ENCODE measurements at regions of chr3 and their contacts with region 1.

Region 1: GRCh38 chr3:46866720-46867549 is 3.7 kb upstream of the MYL3 start:
- DNase-seq: peak; percentile 28 to 51
- ATAC-seq: peak; percentile 57 to 86; a peak in 3 of 6 replicates
- H3K4me3 ChIP-seq: no peak overlapping the region
- H3K27ac ChIP-seq: no peak overlapping the region
- H3K4me1 ChIP-seq: no peaks in the 10 kb centered on the region
- CTCF ChIP-seq: peak; percentile 75
- EP300 ChIP-seq: no peak
- POLR2A ChIP-seq: no peak
- RAD21 ChIP-seq: peak; percentile 68 to 74

Region 2: GRCh38 chr3:46851364-46852333 is 15.3 kb before region 1 on chr3:
- CTCF ChIA-PET with region 1: interaction called, 20 read pairs
- POLR2A ChIA-PET with region 1: no interaction called
- DNase-seq: no peak
- ATAC-seq: no peak
- H3K4me3 ChIP-seq: no peak overlapping the region
- H3K27ac ChIP-seq: no peak overlapping the region
- H3K4me1 ChIP-seq: no peaks in the 10 kb centered on the region
- CTCF ChIP-seq: no peak
- EP300 ChIP-seq: no peak
- POLR2A ChIP-seq: no peak
- RAD21 ChIP-seq: no peak

Region 3: DNA sequence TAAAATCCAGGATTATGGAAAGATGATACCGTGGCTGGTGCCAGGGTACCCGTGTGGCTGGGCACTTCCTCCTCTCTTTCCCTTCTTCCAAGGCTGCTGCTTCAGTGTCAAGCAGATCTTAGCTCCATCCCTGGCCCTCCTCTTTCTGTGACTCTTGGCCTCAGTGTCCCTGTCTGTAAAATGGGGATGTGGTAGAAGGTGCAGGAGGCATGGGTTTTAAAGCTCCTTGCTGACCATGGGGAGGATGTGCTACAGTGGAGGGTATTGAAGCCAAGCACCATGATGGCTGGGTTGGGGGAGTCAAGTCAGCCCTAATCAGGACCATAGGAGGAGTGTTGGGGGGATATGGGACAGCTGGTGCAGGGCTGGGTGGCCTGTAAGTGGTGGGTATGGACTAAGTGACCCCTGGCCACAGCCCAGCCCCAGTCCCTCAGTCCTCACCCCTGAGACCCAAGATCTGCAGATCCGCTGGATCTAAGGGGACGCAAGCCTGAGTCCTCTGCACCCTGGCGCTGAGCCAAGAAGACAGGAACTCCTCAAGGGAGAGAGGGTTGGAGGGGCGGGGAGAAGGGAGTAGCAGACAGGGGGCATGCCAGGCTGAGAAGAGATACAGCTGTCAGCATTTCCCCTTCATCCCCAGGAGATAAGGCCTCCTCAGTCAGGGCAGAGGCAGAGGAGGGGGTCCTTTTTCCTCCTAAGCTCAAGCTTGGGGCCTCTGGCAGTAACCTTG is 22.6 kb after region 1 on chr3:
- CTCF ChIA-PET with region 1: interaction called, 27 read pairs
- POLR2A ChIA-PET with region 1: interaction called, 10 read pairs
- DNase-seq: no peak
- ATAC-seq: no peak
- H3K4me3 ChIP-seq: no peak overlapping the region
- H3K27ac ChIP-seq: no peak overlapping the region
- H3K4me1 ChIP-seq: peaks cover 9% of the 10 kb centered on the region; the same call in 1 of the 3 replicates
- CTCF ChIP-seq: no peak
- EP300 ChIP-seq: no peak
- POLR2A ChIP-seq: no peak
- RAD21 ChIP-seq: no peak

Region 4: DNA sequence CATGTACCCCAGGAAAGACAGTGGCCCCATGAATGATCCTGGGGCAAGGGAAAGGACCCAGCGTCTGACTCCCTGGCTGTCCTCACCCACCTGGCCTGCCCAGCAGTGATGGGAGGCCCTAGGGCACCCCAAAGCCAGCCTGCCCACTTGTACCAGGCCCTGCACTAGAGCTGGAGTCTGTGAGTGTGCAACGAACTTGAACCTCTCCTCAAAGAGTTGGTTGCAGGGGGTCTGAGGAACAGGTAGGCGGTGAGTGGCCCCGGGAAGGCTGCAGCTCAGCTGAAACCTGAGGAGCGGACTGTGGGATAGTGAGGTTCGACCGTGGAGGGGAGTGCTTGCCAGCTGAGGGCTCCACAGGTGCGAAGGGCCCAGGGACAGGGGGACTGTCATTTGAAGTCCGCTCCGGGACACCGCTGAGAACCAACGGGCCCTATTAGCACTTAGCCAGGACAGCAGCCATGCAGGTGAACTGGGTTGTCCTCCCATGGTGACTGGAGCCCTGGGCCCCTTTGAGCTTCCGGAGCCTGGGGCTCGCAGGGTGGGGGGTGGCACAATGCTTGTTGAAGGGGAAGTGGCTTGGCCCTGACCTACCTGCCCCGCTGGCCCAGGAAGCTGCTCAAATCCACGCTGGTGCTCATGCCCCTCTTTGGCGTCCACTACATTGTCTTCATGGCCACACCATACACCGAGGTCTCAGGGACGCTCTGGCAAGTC is 35.1 kb after region 1 on chr3:
- CTCF ChIA-PET with region 1: interaction called, 10 read pairs
- POLR2A ChIA-PET with region 1: no interaction called
- DNase-seq: no peak
- ATAC-seq: no peak
- H3K4me3 ChIP-seq: no peak overlapping the region
- H3K27ac ChIP-seq: no peak overlapping the region
- H3K4me1 ChIP-seq: no peaks in the 10 kb centered on the region
- CTCF ChIP-seq: no peak
- EP300 ChIP-seq: no peak
- POLR2A ChIP-seq: no peak
- RAD21 ChIP-seq: no peak

Region 5: GRCh38 chr3:47047673-47048072 is 180.7 kb after region 1 on chr3:
- CTCF ChIA-PET with region 1: no interaction called
- POLR2A ChIA-PET with region 1: no interaction called
- DNase-seq: no peak
- ATAC-seq: no peak
- H3K4me3 ChIP-seq: no peak overlapping the region
- H3K27ac ChIP-seq: no peak overlapping the region; a peak in 1 of 6 replicates
- H3K4me1 ChIP-seq: peaks cover 7% of the 10 kb centered on the region; the same call in 2 of the 3 replicates
- CTCF ChIP-seq: no peak
- EP300 ChIP-seq: no peak
- POLR2A ChIP-seq: no peak
- RAD21 ChIP-seq: no peak

Measured in A549 (cell line).